ENCODE measurements at regions of chr2 and their contacts with region 1.

Region 1: GRCh38 chr2:203909261-203909967 is 27.1 kb upstream of the ICOS start:
- DNase-seq: peak in 2 of 9 experiments; percentile 44 to 58
- ATAC-seq: peak; percentile 73
- H3K4me3 ChIP-seq: no peak overlapping the region
- H3K4me3 Mint-ChIP-seq: no peak overlapping the region
- H3K27ac ChIP-seq: no peak overlapping the region
- H3K27ac Mint-ChIP-seq: no peak overlapping the region
- H3K4me1 ChIP-seq: peaks cover 10% of the 10 kb centered on the region
- H3K4me1 Mint-ChIP-seq: peaks cover 5% of the 10 kb centered on the region
- H3K27me3 ChIP-seq: peaks cover 0 to 2% of the 10 kb centered on the region in 2 experiments
- H3K27me3 Mint-ChIP-seq: peaks cover 3% of the 10 kb centered on the region
- CTCF ChIP-seq: peak; percentile 90

Region 2: GRCh38 chr2:203484266-203485112 is 424.9 kb before region 1 on chr2:
- CTCF ChIA-PET with region 1: interaction called, 30 read pairs
- POLR2A ChIA-PET with region 1: no interaction called
- intact Hi-C with region 1: loop called (anchors 1 kb)
- DNase-seq: peak; percentile 27 to 77 (median 48)
- ATAC-seq: peak; percentile 88
- H3K4me3 ChIP-seq: no peak overlapping the region
- H3K4me3 Mint-ChIP-seq: no peak overlapping the region
- H3K27ac ChIP-seq: no peak overlapping the region
- H3K27ac Mint-ChIP-seq: no peak overlapping the region
- H3K4me1 ChIP-seq: peaks cover 4% of the 10 kb centered on the region
- H3K4me1 Mint-ChIP-seq: peaks cover 7% of the 10 kb centered on the region
- H3K27me3 ChIP-seq: no peaks in the 10 kb centered on the region
- H3K27me3 Mint-ChIP-seq: no peaks in the 10 kb centered on the region
- CTCF ChIP-seq: peak; percentile 83

Region 3: GRCh38 chr2:203683932-203684556 is 225.4 kb before region 1 on chr2:
- CTCF ChIA-PET with region 1: no interaction called
- POLR2A ChIA-PET with region 1: no interaction called
- intact Hi-C with region 1: no loop called
- DNase-seq: peak in 1 of 9 experiments; percentile 23
- ATAC-seq: peak; percentile 14
- H3K4me3 ChIP-seq: no peak overlapping the region
- H3K4me3 Mint-ChIP-seq: no peak overlapping the region
- H3K27ac ChIP-seq: no peak overlapping the region
- H3K27ac Mint-ChIP-seq: no peak overlapping the region
- H3K4me1 ChIP-seq: no peaks in the 10 kb centered on the region
- H3K4me1 Mint-ChIP-seq: peaks cover 29% of the 10 kb centered on the region
- H3K27me3 ChIP-seq: no peaks in the 10 kb centered on the region
- H3K27me3 Mint-ChIP-seq: no peaks in the 10 kb centered on the region
- CTCF ChIP-seq: no peak

Region 4: DNA sequence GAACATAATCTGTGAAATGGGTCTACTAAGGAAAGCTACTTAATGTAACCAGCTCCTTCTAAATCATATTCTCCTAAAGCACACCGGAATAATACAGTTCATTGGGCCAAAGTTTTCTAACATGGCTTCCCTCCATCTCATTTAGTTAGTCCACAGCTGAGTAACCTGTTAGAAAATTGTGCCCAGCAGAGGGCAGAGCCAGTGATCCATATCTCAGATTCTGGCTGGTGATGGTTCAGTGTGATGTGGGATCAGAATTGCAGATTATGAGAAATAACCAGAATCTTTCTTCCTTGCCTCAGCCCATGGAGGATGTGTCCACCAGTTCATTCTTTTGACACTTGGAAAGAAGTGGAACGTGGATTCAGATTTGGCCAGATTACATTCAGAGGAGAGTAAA is 51.2 kb before region 1 on chr2:
- CTCF ChIA-PET with region 1: interaction called, 20 read pairs
- POLR2A ChIA-PET with region 1: interaction called, 4 read pairs
- intact Hi-C with region 1: loop called (anchors 1 kb)
- DNase-seq: peak in 3 of 9 experiments; percentile 22 to 48 (median 38)
- ATAC-seq: no peak
- H3K4me3 ChIP-seq: no peak overlapping the region
- H3K4me3 Mint-ChIP-seq: no peak overlapping the region
- H3K27ac ChIP-seq: no peak overlapping the region
- H3K27ac Mint-ChIP-seq: no peak overlapping the region
- H3K4me1 ChIP-seq: no peaks in the 10 kb centered on the region
- H3K4me1 Mint-ChIP-seq: peaks cover 31% of the 10 kb centered on the region
- H3K27me3 ChIP-seq: no peaks in the 10 kb centered on the region
- H3K27me3 Mint-ChIP-seq: no peaks in the 10 kb centered on the region
- CTCF ChIP-seq: peak; percentile 39

Region 5: GRCh38 chr2:203873921-203874631 is 35.3 kb before region 1 on chr2:
- CTCF ChIA-PET with region 1: interaction called, 13 read pairs
- POLR2A ChIA-PET with region 1: no interaction called
- intact Hi-C with region 1: no loop called
- DNase-seq: peak in 2 of 9 experiments; percentile 24 to 50
- ATAC-seq: no peak
- H3K4me3 ChIP-seq: no peak overlapping the region
- H3K4me3 Mint-ChIP-seq: no peak overlapping the region
- H3K27ac ChIP-seq: no peak overlapping the region
- H3K27ac Mint-ChIP-seq: peak overlapping the region; percentile 13
- H3K4me1 ChIP-seq: peaks cover 46% of the 10 kb centered on the region
- H3K4me1 Mint-ChIP-seq: peaks cover 60% of the 10 kb centered on the region
- H3K27me3 ChIP-seq: no peaks in the 10 kb centered on the region
- H3K27me3 Mint-ChIP-seq: no peaks in the 10 kb centered on the region
- CTCF ChIP-seq: no peak

Measured in CD8-positive, alpha-beta T cell (primary cell).